IMR-90 (cell line): ENCODE measurements at regions of chr3 and their contacts with region 1.

Region 1: GRCh38 chr3:40437889-40438288 is 19.2 kb upstream of the RPL14 start:
- DNase-seq: no peak
- ATAC-seq: no peak
- H3K4me3 ChIP-seq: no peak overlapping the region
- H3K27ac ChIP-seq: no peak overlapping the region
- H3K4me1 ChIP-seq: no peaks in the 10 kb centered on the region
- H3K27me3 ChIP-seq: no peaks in the 10 kb centered on the region
- CTCF ChIP-seq: no peak
- POLR2A ChIP-seq: no peak
- RAD21 ChIP-seq: no peak

Region 2: DNA sequence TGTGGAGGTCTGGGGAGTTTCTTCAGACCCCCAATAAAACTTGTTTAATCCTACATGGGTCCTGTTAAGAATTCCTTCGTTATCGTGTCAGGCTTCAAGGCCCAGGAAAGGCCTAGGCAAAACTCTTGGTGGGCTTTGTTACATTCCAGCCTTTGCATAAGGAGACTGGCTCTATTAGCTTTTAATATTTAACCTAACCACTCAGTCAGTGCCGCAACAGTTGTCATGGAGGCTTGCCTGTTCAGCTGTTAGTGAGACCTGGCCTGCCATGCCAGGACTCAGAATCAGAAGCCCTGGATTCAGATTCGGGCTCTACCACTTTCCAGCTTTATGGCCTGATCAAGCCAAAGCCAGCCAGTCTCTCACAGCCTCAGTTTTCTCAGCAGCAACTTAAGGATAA is 108.8 kb before region 1 on chr3:
- CTCF ChIA-PET with region 1: no interaction called
- POLR2A ChIA-PET with region 1: no interaction called
- dilution Hi-C with region 1: no loop called
- in situ Hi-C with region 1: no loop called
- intact Hi-C with region 1: loop called (anchors 5 kb)
- DNase-seq: no peak
- ATAC-seq: no peak
- H3K4me3 ChIP-seq: no peak overlapping the region
- H3K27ac ChIP-seq: no peak overlapping the region
- H3K4me1 ChIP-seq: no peaks in the 10 kb centered on the region
- H3K27me3 ChIP-seq: peaks cover 3% of the 10 kb centered on the region
- CTCF ChIP-seq: no peak
- POLR2A ChIP-seq: no peak
- RAD21 ChIP-seq: no peak